CD4-positive, alpha-beta memory T cell (primary cell): ENCODE measurements at regions of chr2 and their contacts with region 1.

Region 1: DNA sequence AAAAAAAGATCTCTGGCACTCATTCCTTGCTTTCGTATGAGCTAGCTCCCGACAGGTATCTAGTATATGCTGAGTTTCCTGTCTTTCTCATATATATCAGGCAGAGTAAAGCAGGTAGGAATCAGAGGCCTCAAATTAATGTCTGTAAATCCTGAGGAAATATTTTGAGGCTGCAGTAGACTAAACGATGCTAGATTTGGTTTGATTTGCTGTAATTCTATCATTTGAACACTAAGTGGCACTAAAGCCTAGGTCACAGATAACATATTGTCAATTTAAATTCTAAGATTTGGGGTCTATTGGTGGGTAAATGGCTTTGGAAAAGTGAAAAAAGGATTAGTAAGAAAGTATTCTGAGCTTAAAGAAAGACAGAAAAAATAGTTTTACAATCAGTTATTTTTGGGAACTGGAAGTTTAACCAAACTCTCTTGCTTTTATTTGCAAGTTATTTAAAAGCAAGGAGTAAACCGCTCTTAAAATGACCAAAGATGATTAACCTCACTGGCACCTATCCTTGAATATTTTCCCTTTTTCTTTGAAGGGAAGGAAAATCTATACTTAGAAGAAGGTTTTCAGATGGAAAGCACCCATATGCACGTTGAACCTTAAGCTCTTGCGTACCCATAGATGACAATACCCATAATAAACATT is 37.6 kb upstream of the SLC4A10 start:
- DNase-seq: peak in 4 of 5 donors; percentile 23 to 33 (median 28)
- H3K4me3 ChIP-seq: no peak overlapping the region
- H3K4me3 Mint-ChIP-seq: no peak overlapping the region
- H3K27ac ChIP-seq: no peak overlapping the region
- H3K27ac Mint-ChIP-seq: no peak overlapping the region
- H3K4me1 ChIP-seq: no peaks in the 10 kb centered on the region
- H3K4me1 Mint-ChIP-seq: no peaks in the 10 kb centered on the region
- H3K27me3 ChIP-seq: no peaks in the 10 kb centered on the region
- H3K27me3 Mint-ChIP-seq: peaks cover 0 to 4% of the 10 kb centered on the region in 2 donors

Region 2: GRCh38 chr2:159855143-159855542 is 1731.5 kb before region 1 on chr2:
- CTCF ChIA-PET with region 1: no interaction called
- POLR2A ChIA-PET with region 1: no interaction called
- intact Hi-C with region 1: no loop called
- DNase-seq: no peak
- H3K4me3 ChIP-seq: no peak overlapping the region
- H3K4me3 Mint-ChIP-seq: no peak overlapping the region
- H3K27ac ChIP-seq: no peak overlapping the region
- H3K27ac Mint-ChIP-seq: no peak overlapping the region
- H3K4me1 ChIP-seq: no peaks in the 10 kb centered on the region
- H3K4me1 Mint-ChIP-seq: no peaks in the 10 kb centered on the region
- H3K27me3 ChIP-seq: no peaks in the 10 kb centered on the region
- H3K27me3 Mint-ChIP-seq: no peaks in the 10 kb centered on the region

Region 3: GRCh38 chr2:161830964-161831363 is 244.3 kb after region 1 on chr2:
- CTCF ChIA-PET with region 1: no interaction called
- POLR2A ChIA-PET with region 1: no interaction called
- intact Hi-C with region 1: no loop called
- DNase-seq: no peak
- H3K4me3 ChIP-seq: no peak overlapping the region
- H3K4me3 Mint-ChIP-seq: no peak overlapping the region
- H3K27ac ChIP-seq: no peak overlapping the region
- H3K27ac Mint-ChIP-seq: no peak overlapping the region
- H3K4me1 ChIP-seq: no peaks in the 10 kb centered on the region
- H3K4me1 Mint-ChIP-seq: no peaks in the 10 kb centered on the region
- H3K27me3 ChIP-seq: no peaks in the 10 kb centered on the region
- H3K27me3 Mint-ChIP-seq: peaks cover 0 to 1% of the 10 kb centered on the region in 2 donors

Region 4: DNA sequence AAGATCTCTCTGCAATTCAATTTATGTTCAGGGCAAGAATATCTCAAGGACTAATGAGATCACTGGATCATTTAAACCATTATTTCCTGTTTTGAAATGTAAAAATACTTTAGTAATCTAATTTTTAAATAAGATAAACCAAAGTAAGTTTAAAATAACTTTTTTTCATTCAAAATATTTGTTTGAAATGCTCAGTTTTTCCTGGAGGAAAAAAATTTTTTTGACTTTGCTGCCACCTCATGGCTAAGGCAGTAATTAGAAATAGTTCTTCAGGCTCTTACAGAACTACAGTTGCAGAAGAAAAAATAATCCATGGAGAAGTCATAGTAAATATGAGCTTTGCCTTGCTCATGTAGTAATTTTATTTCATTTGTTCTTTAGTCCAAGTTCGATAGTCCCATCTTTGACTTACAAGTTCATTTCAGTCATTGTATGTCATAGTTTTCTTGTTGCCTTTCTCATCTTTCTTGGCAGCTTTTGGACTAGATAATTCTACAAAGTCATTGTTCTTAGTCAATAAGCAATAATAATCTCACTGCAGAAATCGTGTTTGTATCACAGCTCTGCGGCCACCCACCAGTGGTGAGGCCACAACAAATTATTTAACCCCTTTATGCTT is 360.0 kb after region 1 on chr2:
- CTCF ChIA-PET with region 1: interaction called, 84 read pairs
- POLR2A ChIA-PET with region 1: no interaction called
- intact Hi-C with region 1: loop called (anchors 1 kb)
- DNase-seq: peak in 4 of 5 donors; percentile 15 to 31 (median 22)
- H3K4me3 ChIP-seq: no peak overlapping the region
- H3K4me3 Mint-ChIP-seq: no peak overlapping the region
- H3K27ac ChIP-seq: no peak overlapping the region
- H3K27ac Mint-ChIP-seq: no peak overlapping the region
- H3K4me1 ChIP-seq: peaks cover 12% of the 10 kb centered on the region
- H3K4me1 Mint-ChIP-seq: peaks cover 4 to 5% (median 5%) of the 10 kb centered on the region in 4 donors
- H3K27me3 ChIP-seq: peaks cover 3% of the 10 kb centered on the region
- H3K27me3 Mint-ChIP-seq: no peaks in the 10 kb centered on the region

Region 5: DNA sequence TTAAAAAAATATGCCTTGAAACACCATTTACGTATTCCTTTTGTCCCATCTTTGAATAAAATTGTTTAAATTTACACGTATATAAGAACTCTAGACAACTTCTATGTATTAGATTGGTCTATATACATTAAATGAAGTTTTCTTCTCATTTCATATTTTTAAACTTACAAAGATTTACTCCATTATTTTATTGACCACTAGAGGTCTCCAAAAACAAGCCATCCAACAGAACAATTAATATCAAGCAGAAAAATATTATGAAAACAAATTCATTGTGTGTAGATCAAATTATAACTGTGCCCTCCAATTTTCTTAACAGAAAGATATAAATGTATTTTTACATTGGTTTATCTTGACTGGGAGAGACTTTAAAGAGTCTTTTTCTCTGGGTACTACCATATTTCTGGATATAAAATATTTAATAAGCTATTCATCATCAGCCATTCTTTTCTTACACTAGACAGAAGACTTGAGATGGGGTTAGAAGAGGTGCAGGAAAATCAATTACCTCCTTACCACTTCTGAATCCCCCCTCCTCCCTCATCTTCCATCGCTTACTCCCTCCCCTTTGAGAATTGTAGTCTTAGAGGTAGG is 420.9 kb after region 1 on chr2:
- CTCF ChIA-PET with region 1: no interaction called
- POLR2A ChIA-PET with region 1: no interaction called
- intact Hi-C with region 1: loop called (anchors 2 kb)
- DNase-seq: peak in 4 of 5 donors; percentile 36 to 46 (median 40)
- H3K4me3 ChIP-seq: no peak overlapping the region
- H3K4me3 Mint-ChIP-seq: no peak overlapping the region
- H3K27ac ChIP-seq: no peak overlapping the region
- H3K27ac Mint-ChIP-seq: peak overlapping the region in 6 of 7 donors; percentile 4 to 33 (median 21)
- H3K4me1 ChIP-seq: peaks cover 40% of the 10 kb centered on the region
- H3K4me1 Mint-ChIP-seq: peaks cover 36 to 55% (median 44%) of the 10 kb centered on the region in 4 donors
- H3K27me3 ChIP-seq: no peaks in the 10 kb centered on the region
- H3K27me3 Mint-ChIP-seq: no peaks in the 10 kb centered on the region

Region 6: DNA sequence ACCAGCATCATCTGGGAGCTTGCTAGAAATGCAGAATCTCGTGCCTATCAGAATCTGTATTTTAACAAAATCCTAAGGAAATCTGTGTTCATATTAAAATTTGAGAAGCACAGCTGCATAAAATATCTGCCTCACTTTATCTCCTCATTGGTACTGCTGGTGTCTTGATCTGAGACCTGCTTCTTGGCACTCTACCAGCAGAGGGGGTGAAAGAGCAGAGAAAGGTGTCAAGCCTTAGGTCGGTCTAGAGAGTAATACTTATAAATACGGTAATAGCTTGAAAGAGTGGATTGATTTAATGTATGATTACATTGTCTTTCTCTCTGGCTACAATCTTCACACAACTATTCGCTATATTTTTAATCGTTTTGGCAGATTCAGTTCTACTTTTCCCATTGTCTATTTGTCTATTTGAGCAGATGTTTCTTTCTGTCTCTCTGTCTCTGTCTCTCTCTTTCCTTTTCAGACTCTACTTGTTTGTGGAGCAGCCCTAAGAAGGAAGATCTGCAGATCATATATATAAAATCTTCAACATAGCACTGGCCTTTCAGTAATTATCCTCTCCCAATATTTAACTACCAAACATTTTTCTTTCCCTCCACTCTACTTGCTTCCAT is 567.1 kb after region 1 on chr2:
- CTCF ChIA-PET with region 1: interaction called, 17 read pairs
- POLR2A ChIA-PET with region 1: no interaction called
- intact Hi-C with region 1: no loop called
- DNase-seq: peak in 4 of 5 donors; percentile 55 to 58 (median 57)
- H3K4me3 ChIP-seq: no peak overlapping the region
- H3K4me3 Mint-ChIP-seq: peak overlapping the region in 5 of 8 donors; percentile 7 to 72 (median 35)
- H3K27ac ChIP-seq: no peak overlapping the region
- H3K27ac Mint-ChIP-seq: no peak overlapping the region
- H3K4me1 ChIP-seq: peaks cover 6% of the 10 kb centered on the region
- H3K4me1 Mint-ChIP-seq: peaks cover 0 to 5% (median 3%) of the 10 kb centered on the region in 4 donors
- H3K27me3 ChIP-seq: no peaks in the 10 kb centered on the region
- H3K27me3 Mint-ChIP-seq: peaks cover 14 to 16% of the 10 kb centered on the region in 2 donors